ENCODE measurements at regions of chr1 and their contacts with region 1.

Region 1: DNA sequence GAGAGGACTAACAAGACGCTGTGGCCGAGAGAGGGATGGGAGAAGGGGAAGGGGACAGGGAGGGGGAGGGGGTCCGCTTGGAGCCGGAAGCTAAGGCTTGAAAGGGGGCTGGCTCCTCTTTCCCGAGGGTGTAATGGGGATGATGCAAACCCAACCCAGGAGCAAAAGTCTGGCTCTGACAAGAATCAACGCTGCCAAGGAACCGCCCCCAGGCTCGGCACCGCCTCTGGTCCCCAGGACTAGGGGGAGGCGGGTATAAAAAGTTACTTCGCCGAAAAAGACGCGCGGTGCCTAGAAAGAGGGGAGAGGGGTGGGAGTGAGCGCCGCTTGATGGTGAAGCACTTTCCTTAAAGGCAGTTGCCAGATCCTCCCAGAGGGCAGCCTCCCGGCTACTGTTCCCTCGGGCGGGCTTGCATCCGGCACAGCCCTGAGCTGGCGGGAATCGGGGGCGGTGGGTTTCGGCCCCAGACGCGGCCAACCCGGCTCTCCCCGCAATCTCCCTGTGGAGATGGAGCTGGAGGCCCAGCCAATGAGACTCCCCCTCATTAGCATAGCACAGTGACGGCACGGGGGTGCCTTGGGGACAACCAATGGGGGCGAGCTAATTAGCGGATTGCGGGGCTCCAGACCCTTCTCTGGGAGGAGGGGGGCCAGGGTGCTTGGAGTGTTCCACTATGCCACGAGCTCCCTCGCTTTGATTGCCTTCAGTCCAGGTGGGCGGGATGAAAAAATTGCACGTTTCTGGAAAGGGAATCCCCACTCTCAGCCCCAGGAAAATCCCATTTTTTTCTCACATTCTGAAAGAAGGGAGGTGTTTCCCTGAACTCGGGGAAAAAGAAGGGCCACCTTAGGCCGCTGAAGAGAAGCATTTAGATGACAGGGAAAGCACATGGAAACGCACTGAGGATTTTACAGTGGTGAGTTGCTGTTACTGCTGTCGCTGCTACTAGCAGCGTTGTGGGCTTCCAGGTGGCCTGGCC is at the start of gene KCNT2:
- DNase-seq: peak; percentile 93 to 94
- H3K4me3 ChIP-seq: peak within 1 kb of the TSS; percentile 51 to 98 (median 88)
- H3K27ac ChIP-seq: peak within 1 kb of the TSS; percentile 85
- H3K4me1 ChIP-seq: peaks cover 0 to 10% (median 8%) of the 10 kb centered on the region in 4 experiments; a peak in 5 of 7 replicates
- H3K27me3 ChIP-seq: no peaks in the 10 kb centered on the region
- CTCF ChIP-seq: peak in 2 of 3 experiments; percentile 4 to 45; a peak in 2 of 4 replicates
- EP300 ChIP-seq: peak in 1 of 2 experiments; percentile 2; a peak in 1 of 3 replicates
- POLR2A ChIP-seq: peak; percentile 83 to 99
- RAD21 ChIP-seq: peak in 1 of 2 experiments; percentile 21; a peak in 2 of 4 replicates
- total RNA-seq, gene KCNT2: 9.3 and 10.2 TPM in 2 replicates

Region 2: GRCh38 chr1:196593955-196594354 is 14.7 kb before region 1 on chr1:
- CTCF ChIA-PET with region 1: interaction called, 3 read pairs
- POLR2A ChIA-PET with region 1: interaction called, 18 read pairs
- DNase-seq: no peak
- H3K4me3 ChIP-seq: no peak overlapping the region
- H3K27ac ChIP-seq: no peak overlapping the region
- H3K4me1 ChIP-seq: peaks cover 0 to 2% (median 0%) of the 10 kb centered on the region in 4 experiments; a peak in 1 of 7 replicates
- H3K27me3 ChIP-seq: no peaks in the 10 kb centered on the region
- CTCF ChIP-seq: no peak
- EP300 ChIP-seq: no peak
- POLR2A ChIP-seq: no peak
- RAD21 ChIP-seq: no peak

Region 3: GRCh38 chr1:196619721-196620120 is 11.0 kb after region 1 on chr1:
- CTCF ChIA-PET with region 1: interaction called, 4 read pairs
- POLR2A ChIA-PET with region 1: interaction called, 11 read pairs
- DNase-seq: no peak
- H3K4me3 ChIP-seq: no peak overlapping the region
- H3K27ac ChIP-seq: no peak overlapping the region
- H3K4me1 ChIP-seq: no peaks in the 10 kb centered on the region
- H3K27me3 ChIP-seq: no peaks in the 10 kb centered on the region
- CTCF ChIP-seq: no peak
- EP300 ChIP-seq: no peak
- POLR2A ChIP-seq: no peak
- RAD21 ChIP-seq: no peak